H1 (cell line): ENCODE measurements at regions of chr2 and their contacts with region 1.

Region 1: DNA sequence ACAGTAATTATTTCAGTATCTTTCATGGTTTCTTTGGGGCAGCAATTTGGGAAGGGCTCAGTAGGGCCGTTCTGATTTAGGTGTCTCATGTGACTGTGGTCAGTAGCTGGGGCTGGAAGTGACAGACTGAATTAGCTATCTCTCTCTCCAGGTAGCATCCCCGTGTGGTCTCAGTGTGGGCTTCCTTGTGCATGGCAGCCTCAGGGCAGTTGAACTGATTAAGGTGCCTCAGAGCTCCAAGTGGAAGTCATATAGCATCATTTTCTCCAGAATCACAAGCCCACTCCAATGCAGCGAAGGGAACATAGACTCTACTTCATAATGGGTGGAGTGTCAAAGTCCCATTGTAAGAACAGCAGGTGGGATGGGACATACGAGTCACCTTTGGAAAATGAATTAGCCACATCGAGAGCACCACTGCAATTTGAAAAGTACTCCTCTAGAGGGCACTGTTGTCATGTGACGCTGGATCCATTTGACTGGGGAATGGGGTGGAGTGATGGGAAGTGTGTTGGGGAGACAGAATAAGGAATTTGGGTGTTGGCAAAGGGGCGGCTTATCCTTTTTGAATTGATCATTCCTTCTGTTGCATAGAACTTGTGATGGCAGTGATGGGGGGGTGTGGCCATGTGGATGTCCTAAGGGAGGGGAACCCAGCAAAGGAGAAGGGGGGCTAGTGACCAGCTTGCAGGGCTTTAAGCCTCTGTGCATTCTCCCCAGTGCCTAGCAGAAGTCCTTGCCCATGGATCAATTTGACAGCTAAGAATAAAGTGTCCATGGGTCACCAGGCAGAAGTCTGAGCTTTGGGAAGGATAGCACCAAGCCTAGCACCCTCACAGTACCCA is 39.3 kb upstream of the FAM136A start:
- DNase-seq: peak in 1 of 2 experiments; percentile 68
- H3K4me3 ChIP-seq: no peak overlapping the region
- H3K27ac ChIP-seq: no peak overlapping the region
- H3K4me1 ChIP-seq: no peaks in the 10 kb centered on the region
- H3K27me3 ChIP-seq: peaks cover 0 to 3% (median 0%) of the 10 kb centered on the region in 4 experiments; a peak in 2 of 7 replicates
- CTCF ChIP-seq: peak; percentile 42 to 89 (median 89)
- EP300 ChIP-seq: no peak
- POLR2A ChIP-seq: no peak
- RAD21 ChIP-seq: peak; percentile 97 to 99

Region 2: DNA sequence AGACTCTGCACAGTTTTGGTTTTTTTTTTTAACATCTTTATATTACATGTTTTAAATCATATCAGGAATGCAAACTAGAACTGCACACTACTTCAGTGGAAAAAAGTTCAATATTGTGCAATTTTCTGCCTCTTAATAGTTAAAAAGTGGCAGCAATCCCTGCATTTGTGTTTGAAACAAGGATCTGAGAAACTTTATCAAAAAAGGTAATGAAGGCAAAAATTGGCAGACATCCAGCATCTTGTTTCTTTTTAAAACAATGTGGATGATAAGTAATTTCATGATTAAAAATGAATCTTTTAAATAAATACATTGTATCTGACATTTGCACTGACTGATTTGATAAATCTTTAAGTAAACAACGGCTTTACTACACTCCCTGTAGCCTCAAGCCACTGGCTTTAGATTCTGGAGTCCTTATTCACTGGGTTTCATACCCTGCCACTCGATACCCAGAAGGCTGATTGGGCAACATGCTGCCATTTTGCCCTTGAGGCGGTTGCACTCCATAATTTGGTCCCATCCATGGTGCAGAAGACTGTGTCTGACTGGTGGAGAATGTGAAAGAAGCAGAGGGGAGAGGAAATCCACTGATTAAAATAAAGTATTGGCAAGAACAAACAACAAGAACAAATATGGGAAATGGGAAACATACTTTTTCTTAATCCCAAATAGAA is 128.7 kb before region 1 on chr2:
- CTCF ChIA-PET with region 1: no interaction called
- POLR2A ChIA-PET with region 1: no interaction called
- DNase-seq: no peak
- H3K4me3 ChIP-seq: no peak overlapping the region
- H3K27ac ChIP-seq: no peak overlapping the region
- H3K4me1 ChIP-seq: no peaks in the 10 kb centered on the region
- H3K27me3 ChIP-seq: no peaks in the 10 kb centered on the region
- CTCF ChIP-seq: no peak
- EP300 ChIP-seq: no peak
- POLR2A ChIP-seq: no peak
- RAD21 ChIP-seq: no peak

Region 3: GRCh38 chr2:70301344-70302194 is 39.6 kb before region 1 on chr2 and contains the start of gene FAM136A:
- CTCF ChIA-PET with region 1: interaction called, 50 read pairs
- POLR2A ChIA-PET with region 1: interaction called, 4 read pairs
- DNase-seq: peak; percentile 61 to 98
- H3K4me3 ChIP-seq: peak within 1 kb of the TSS; percentile 63 to 86 (median 75)
- H3K27ac ChIP-seq: peak within 1 kb of the TSS; percentile 87
- H3K4me1 ChIP-seq: peaks cover 0 to 8% (median 5%) of the 10 kb centered on the region in 4 experiments; a peak in 3 of 7 replicates
- H3K27me3 ChIP-seq: no peaks in the 10 kb centered on the region
- CTCF ChIP-seq: peak; percentile 86 to 97 (median 91)
- EP300 ChIP-seq: peak in 1 of 2 experiments; percentile 50; a peak in 1 of 3 replicates
- POLR2A ChIP-seq: peak; percentile 86 to 95
- RAD21 ChIP-seq: peak; percentile 34 to 55; a peak in 3 of 4 replicates
- total RNA-seq, gene FAM136A: 118 and 122 TPM in 2 replicates

Region 4: GRCh38 chr2:70328921-70329561 is 12.1 kb before region 1 on chr2:
- CTCF ChIA-PET with region 1: interaction called, 47 read pairs
- POLR2A ChIA-PET with region 1: no interaction called
- DNase-seq: peak in 1 of 2 experiments; percentile 23
- H3K4me3 ChIP-seq: no peak overlapping the region
- H3K27ac ChIP-seq: no peak overlapping the region
- H3K4me1 ChIP-seq: peaks cover 0 to 6% (median 0%) of the 10 kb centered on the region in 4 experiments; a peak in 1 of 7 replicates
- H3K27me3 ChIP-seq: no peaks in the 10 kb centered on the region; a peak in 1 of 7 replicates
- CTCF ChIP-seq: no peak
- EP300 ChIP-seq: no peak
- POLR2A ChIP-seq: no peak
- RAD21 ChIP-seq: no peak

Region 5: DNA sequence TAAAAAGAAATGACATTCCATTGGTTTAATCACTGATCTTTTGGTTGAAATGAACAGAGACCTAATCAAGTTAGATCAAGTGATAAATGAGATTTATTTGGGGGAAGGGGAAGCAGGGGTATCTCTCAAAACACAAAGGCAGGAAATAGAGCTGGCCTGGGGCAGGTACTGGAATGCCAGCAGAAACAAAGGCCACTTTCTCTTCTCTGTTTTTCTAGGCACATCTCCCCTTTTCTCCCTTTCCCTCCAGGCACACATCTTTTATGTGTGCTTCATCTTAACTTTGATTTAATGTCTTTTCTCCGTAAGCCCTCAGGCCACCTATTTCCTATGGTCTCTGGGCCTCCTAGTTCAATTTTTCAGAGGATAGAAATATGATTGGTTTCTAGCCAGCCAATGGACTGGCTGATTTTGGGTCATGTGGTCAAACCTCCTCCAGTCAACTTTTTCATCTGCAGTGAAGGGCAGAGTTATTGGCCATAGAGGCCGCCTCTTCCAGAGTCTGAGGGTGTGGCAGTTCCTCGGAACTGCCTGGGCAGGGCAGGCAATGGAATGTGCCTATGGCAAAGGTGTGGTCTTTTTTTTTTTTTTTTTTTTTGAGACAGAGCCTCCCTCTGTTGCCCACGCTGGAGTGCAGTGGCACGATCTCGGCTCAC is 19.6 kb after region 1 on chr2:
- CTCF ChIA-PET with region 1: interaction called, 31 read pairs
- POLR2A ChIA-PET with region 1: no interaction called
- DNase-seq: no peak
- H3K4me3 ChIP-seq: no peak overlapping the region
- H3K27ac ChIP-seq: no peak overlapping the region
- H3K4me1 ChIP-seq: peaks cover 0 to 3% (median 0%) of the 10 kb centered on the region in 4 experiments; a peak in 1 of 7 replicates
- H3K27me3 ChIP-seq: peaks cover 0 to 2% (median 0%) of the 10 kb centered on the region in 4 experiments; a peak in 1 of 7 replicates
- CTCF ChIP-seq: no peak
- EP300 ChIP-seq: no peak
- POLR2A ChIP-seq: no peak
- RAD21 ChIP-seq: no peak

Region 6: GRCh38 chr2:70460333-70460732 is 119.2 kb after region 1 on chr2:
- CTCF ChIA-PET with region 1: interaction called, 11 read pairs
- POLR2A ChIA-PET with region 1: no interaction called
- DNase-seq: no peak
- H3K4me3 ChIP-seq: no peak overlapping the region
- H3K27ac ChIP-seq: no peak overlapping the region
- H3K4me1 ChIP-seq: peaks cover 0 to 10% (median 4%) of the 10 kb centered on the region in 4 experiments; a peak in 5 of 7 replicates
- H3K27me3 ChIP-seq: no peaks in the 10 kb centered on the region
- CTCF ChIP-seq: peak; percentile 66 to 84 (median 75)
- EP300 ChIP-seq: no peak
- POLR2A ChIP-seq: no peak
- RAD21 ChIP-seq: peak; percentile 50 to 70

Region 7: DNA sequence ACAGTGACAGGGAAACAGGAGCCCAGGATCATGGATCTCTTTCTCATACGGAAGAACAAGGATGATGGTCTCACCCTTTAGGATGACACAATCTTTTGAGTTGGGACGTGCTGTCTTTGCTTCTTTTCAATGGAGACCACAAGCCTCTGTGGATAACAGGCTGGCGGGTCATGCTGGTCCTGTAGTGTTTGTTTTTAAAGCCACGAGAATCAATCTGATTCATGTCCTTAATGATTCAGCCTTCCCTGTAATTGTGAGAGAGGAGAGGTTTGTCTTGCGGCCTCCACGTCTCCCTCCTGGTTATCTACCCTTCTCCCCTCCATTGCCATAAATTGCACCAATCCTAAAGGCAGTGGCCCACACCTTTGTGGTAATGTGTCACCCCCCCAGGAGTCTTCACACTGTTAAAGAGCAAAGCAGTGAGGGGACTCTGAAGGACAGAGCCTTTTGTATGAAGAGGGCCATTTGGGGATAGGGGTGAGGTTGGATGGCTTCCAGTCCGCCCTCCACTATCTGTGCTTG is 300.2 kb after region 1 on chr2:
- CTCF ChIA-PET with region 1: interaction called, 67 read pairs
- POLR2A ChIA-PET with region 1: no interaction called
- DNase-seq: no peak
- H3K4me3 ChIP-seq: no peak overlapping the region
- H3K27ac ChIP-seq: no peak overlapping the region
- H3K4me1 ChIP-seq: no peaks in the 10 kb centered on the region
- H3K27me3 ChIP-seq: no peaks in the 10 kb centered on the region; a peak in 2 of 7 replicates
- CTCF ChIP-seq: no peak
- EP300 ChIP-seq: no peak
- POLR2A ChIP-seq: no peak
- RAD21 ChIP-seq: no peak